ENCODE measurements at regions of chr19 and their contacts with region 1.

Region 1: GRCh38 chr19:5690125-5690954 is at the start of gene RPL36:
- DNase-seq: peak; percentile 99
- ATAC-seq: peak; percentile 60
- H3K4me3 Mint-ChIP-seq: peak within 1 kb of the TSS; percentile 97
- H3K27ac Mint-ChIP-seq: peak within 1 kb of the TSS; percentile 95
- H3K4me1 Mint-ChIP-seq: peaks cover 40% of the 10 kb centered on the region
- H3K27me3 Mint-ChIP-seq: no peaks in the 10 kb centered on the region
- total RNA-seq, gene RPL36: 926 to 951 TPM

Region 2: DNA sequence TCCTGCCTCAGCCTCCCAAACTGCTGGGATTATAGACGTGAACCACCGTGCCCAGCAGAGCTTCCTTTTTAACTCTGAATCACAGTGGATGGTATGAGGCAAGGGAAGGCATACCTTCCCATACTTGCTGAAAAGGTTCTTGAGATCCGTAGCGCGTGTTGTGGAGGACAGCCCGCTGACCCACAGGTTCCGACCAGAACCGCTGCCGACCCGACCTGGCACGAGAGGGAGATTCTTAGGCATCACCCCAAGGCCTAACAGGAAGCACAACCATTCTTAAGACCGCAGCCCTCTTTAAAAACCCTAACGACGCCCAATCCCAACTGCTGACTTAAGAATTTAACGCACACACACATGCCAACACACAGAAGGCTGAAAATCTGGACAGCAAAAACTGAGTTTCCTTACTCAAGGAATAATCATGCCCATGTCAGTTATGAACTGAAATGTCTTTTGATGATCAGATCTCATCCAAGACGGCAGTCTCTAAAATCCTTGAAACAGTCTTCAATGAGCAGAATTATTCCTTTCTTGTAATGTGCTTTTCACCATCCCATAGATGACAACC is 80.4 kb before region 1 on chr19:
- CTCF ChIA-PET with region 1: no interaction called
- POLR2A ChIA-PET with region 1: no interaction called
- DNase-seq: no peak
- ATAC-seq: no peak
- H3K4me3 Mint-ChIP-seq: no peak overlapping the region
- H3K27ac Mint-ChIP-seq: no peak overlapping the region
- H3K4me1 Mint-ChIP-seq: no peaks in the 10 kb centered on the region
- H3K27me3 Mint-ChIP-seq: no peaks in the 10 kb centered on the region

Region 3: DNA sequence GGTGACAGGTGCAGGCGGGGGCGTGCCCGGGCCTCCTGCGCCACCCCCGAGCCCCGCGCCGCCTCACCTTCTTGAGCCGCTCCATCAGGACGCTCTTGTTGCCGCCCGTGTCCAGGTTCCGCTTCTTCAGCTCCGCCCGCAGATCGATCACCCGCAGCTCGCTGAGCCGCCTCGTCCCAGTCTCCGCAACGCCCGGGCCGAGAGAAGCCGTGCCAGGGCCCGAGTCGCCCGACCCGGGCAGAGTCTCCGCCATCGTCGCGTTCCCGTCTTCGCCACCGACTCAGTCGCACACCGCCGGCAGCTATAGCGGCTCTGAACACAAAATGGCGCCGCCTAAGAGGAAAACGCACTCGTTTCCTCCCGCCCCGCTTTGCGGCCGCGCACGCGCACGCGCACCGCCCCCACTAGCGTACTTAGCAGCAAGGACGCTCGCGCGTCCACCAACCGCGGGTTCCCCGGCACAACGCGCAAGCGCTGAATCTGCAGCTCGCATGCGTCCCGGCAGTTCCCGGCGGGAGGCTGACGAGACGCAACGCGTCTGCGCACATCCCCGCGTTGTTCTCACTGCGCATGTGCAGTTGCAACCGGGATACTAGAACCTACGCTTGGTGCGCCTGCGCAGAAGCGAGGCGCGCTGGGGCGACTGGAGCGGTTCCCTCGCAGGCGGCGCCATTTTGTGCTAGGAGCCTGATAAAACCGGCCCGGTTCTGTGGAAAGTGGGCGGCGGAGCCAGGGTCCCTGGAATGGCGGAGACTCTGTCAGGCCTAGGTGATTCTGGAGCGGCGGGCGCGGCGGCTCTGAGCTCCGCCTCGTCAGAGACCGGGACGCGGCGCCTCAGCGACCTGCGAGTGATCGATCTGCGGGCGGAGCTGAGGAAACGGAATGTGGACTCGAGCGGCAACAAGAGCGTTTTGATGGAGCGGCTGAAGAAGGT is 67.6 kb before region 1 on chr19 and contains the starts of genes SAFB and SAFB2:
- CTCF ChIA-PET with region 1: interaction called, 63 read pairs
- POLR2A ChIA-PET with region 1: interaction called, 19 read pairs
- DNase-seq: peak; percentile 100
- ATAC-seq: peak; percentile 92
- H3K4me3 Mint-ChIP-seq: peak within 1 kb of the TSS; percentile 100
- H3K27ac Mint-ChIP-seq: peak within 1 kb of the TSS; percentile 99
- H3K4me1 Mint-ChIP-seq: peaks cover 71% of the 10 kb centered on the region
- H3K27me3 Mint-ChIP-seq: no peaks in the 10 kb centered on the region
- total RNA-seq, gene SAFB: 116 to 134 TPM
- total RNA-seq, gene SAFB2: 84.2 to 96.6 TPM

Region 4: GRCh38 chr19:5707576-5708575 is 17.5 kb after region 1 on chr19:
- CTCF ChIA-PET with region 1: interaction called, 12 read pairs
- POLR2A ChIA-PET with region 1: interaction called, 5 read pairs
- DNase-seq: no peak
- ATAC-seq: peak; percentile 7
- H3K4me3 Mint-ChIP-seq: no peak overlapping the region
- H3K27ac Mint-ChIP-seq: no peak overlapping the region
- H3K4me1 Mint-ChIP-seq: no peaks in the 10 kb centered on the region
- H3K27me3 Mint-ChIP-seq: no peaks in the 10 kb centered on the region

Region 5: DNA sequence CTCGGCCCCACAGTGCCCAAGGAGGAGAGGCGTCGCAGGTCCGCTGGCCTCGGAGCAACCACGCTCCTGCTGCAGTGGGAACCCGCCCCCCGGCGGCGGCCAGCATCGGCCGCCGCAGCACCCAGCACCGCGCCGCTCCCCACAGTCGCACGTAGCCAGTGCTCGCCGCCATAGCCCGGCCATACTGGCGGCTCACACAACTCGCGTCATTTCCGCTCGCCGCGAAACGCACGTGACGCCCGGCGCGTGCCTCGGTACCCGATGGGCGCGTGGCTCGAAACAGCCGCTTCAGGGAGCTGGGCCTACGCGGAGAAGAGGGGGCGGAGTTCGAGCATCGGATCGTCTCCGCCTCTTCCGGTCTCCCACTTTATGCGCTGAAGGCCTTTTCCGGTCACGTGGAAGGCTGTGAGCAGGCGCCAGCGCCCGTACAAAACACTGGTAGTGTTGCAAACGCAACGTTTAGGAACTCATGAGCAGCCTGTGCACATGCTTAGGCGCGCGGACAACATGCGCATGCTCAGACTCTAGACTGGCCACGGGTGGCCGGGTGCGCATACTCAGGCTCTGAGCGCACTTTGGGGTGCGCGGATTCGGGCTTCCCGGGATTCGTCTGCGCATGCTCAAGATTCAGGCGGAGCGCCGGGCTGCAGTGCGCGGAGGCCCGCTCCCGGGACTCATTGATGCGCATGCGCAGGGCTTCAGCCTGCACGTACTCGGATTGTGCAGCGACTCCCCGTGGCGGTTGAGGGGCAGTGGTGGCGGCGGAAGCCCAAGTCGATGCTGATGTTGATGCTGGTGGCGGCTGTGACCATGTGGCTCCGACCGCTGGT is 29.8 kb after region 1 on chr19 and contains the starts of genes CATSPERD and LONP1:
- CTCF ChIA-PET with region 1: interaction called, 113 read pairs
- POLR2A ChIA-PET with region 1: interaction called, 21 read pairs
- DNase-seq: peak; percentile 99
- ATAC-seq: peak; percentile 90
- H3K4me3 Mint-ChIP-seq: peak within 1 kb of the TSS; percentile 95
- H3K27ac Mint-ChIP-seq: peak within 1 kb of the TSS; percentile 96
- H3K4me1 Mint-ChIP-seq: peaks cover 29% of the 10 kb centered on the region
- H3K27me3 Mint-ChIP-seq: peaks cover 2% of the 10 kb centered on the region
- total RNA-seq, gene CATSPERD: not detected
- total RNA-seq, gene LONP1: 114 to 129 TPM

Region 6: GRCh38 chr19:5790573-5791520 is 100.5 kb after region 1 on chr19 and contains the start of gene DUS3L:
- CTCF ChIA-PET with region 1: interaction called, 10 read pairs
- POLR2A ChIA-PET with region 1: interaction called, 3 read pairs
- DNase-seq: peak; percentile 98
- ATAC-seq: peak; percentile 96
- H3K4me3 Mint-ChIP-seq: peak within 1 kb of the TSS; percentile 100
- H3K27ac Mint-ChIP-seq: peak within 1 kb of the TSS; percentile 100
- H3K4me1 Mint-ChIP-seq: peaks cover 16% of the 10 kb centered on the region
- H3K27me3 Mint-ChIP-seq: no peaks in the 10 kb centered on the region
- total RNA-seq, gene DUS3L: 56.6 to 66.3 TPM

Measured in activated CD8-positive, alpha-beta T cell treated with anti-CD3 and anti-CD28 coated beads, Interleukin-2, amount 10 ng/mL, durations not matched to agents 7 days and 5 days (primary cell).